ENCODE measurements at regions of chr16 and their contacts with region 1.

Region 1: GRCh38 chr16:78727536-78727935 is 628.1 kb downstream of the WWOX start:
- DNase-seq: no peak
- ATAC-seq: no peak
- H3K4me3 ChIP-seq: no peak overlapping the region
- H3K4me3 Mint-ChIP-seq: no peak overlapping the region
- H3K27ac ChIP-seq: no peak overlapping the region
- H3K27ac Mint-ChIP-seq: no peak overlapping the region
- H3K4me1 ChIP-seq: no peaks in the 10 kb centered on the region
- H3K4me1 Mint-ChIP-seq: no peaks in the 10 kb centered on the region
- H3K27me3 ChIP-seq: no peaks in the 10 kb centered on the region
- H3K27me3 Mint-ChIP-seq: no peaks in the 10 kb centered on the region

Region 2: DNA sequence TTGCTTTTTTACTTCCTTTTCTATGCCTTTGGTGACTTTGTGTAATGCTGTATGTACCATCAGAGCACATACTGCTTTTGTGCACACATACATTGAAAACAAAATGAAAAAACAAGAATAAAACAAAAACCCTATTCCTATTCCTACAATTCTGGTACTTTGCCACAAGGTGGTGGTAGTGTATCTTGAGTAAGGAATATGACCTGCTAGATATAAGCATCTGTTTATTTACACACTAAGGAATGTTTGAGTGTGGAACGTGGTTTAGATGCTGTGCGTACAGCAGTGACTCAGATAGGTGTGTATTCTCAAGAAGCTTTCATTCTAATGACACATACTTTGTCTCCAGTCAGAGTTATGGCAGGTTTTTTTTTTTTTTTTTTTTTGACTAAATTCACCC is 21.8 kb before region 1 on chr16:
- CTCF ChIA-PET with region 1: no interaction called
- POLR2A ChIA-PET with region 1: no interaction called
- DNase-seq: peak in 1 of 35 experiments; percentile 64
- ATAC-seq: peak in 3 of 4 experiments; percentile 35 to 69 (median 54)
- H3K4me3 ChIP-seq: no peak overlapping the region
- H3K4me3 Mint-ChIP-seq: no peak overlapping the region
- H3K27ac ChIP-seq: no peak overlapping the region
- H3K27ac Mint-ChIP-seq: no peak overlapping the region
- H3K4me1 ChIP-seq: no peaks in the 10 kb centered on the region
- H3K4me1 Mint-ChIP-seq: peaks cover 2 to 8% (median 5%) of the 10 kb centered on the region in 3 donors
- H3K27me3 ChIP-seq: no peaks in the 10 kb centered on the region
- H3K27me3 Mint-ChIP-seq: no peaks in the 10 kb centered on the region

Region 3: DNA sequence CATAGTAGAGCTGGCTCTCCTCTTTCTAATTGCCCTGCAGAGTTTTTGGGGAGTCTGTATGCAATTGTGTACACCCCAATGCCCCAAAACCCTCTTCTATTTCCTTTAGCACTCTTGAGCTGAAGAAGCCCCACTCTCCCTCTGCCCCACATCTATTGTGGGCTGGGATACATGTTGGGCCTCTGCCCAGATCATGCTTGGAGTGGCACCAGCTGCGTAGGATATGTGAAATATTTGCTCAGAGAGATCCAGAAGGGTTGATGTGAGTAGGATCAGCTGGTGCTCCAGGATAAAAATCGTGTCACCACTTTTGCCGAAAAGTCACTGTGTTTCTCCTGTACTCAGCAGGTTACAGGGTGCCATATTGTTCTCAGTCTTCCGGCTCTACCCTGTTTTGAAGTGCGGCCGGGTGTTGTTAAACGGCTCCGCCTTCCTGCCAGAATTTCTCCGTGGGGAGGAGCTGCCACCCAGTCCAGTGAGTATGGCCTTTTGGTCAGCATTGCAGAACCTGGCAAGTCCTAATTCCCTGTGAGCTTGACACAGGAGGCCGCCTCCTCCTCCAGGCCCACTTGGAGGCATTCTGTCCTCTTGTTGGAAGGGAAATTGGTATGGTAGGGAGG is 36.4 kb after region 1 on chr16:
- CTCF ChIA-PET with region 1: interaction called, 3 to 10 read pairs
- POLR2A ChIA-PET with region 1: no interaction called
- DNase-seq: no peak
- ATAC-seq: no peak
- H3K4me3 ChIP-seq: no peak overlapping the region
- H3K4me3 Mint-ChIP-seq: no peak overlapping the region
- H3K27ac ChIP-seq: no peak overlapping the region
- H3K27ac Mint-ChIP-seq: no peak overlapping the region
- H3K4me1 ChIP-seq: peaks cover 0 to 23% of the 10 kb centered on the region in 2 experiments
- H3K4me1 Mint-ChIP-seq: peaks cover 7 to 12% (median 9%) of the 10 kb centered on the region in 3 donors
- H3K27me3 ChIP-seq: no peaks in the 10 kb centered on the region
- H3K27me3 Mint-ChIP-seq: no peaks in the 10 kb centered on the region

Region 4: DNA sequence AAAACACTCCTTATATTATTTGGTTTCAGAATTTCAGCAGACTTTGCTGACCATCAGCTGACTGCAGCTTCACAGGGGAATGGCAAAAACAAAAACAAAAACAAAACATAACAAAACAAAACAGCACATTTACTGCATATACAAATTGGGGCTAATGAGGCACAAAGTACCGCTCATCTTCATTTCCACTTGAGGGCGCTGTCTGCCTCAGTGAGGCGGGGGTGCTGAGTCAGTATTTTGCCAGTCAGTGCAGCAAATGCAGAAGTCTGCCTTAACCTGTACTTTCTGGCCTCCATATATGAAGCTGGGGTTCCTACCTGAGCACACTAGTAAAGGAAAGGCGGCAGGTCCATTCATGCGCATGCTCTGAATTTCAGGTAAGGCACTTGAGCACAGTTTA is 1799.8 kb after region 1 on chr16:
- CTCF ChIA-PET with region 1: interaction called in 1 of 2 experiments, 18 read pairs
- POLR2A ChIA-PET with region 1: no interaction called
- DNase-seq: peak in 26 of 35 experiments; percentile 4 to 54 (median 18)
- ATAC-seq: peak in 3 of 4 experiments; percentile 33 to 48 (median 44)
- H3K4me3 ChIP-seq: no peak overlapping the region
- H3K4me3 Mint-ChIP-seq: no peak overlapping the region
- H3K27ac ChIP-seq: no peak overlapping the region
- H3K27ac Mint-ChIP-seq: no peak overlapping the region
- H3K4me1 ChIP-seq: no peaks in the 10 kb centered on the region
- H3K4me1 Mint-ChIP-seq: peaks cover 0 to 7% (median 2%) of the 10 kb centered on the region in 3 donors
- H3K27me3 ChIP-seq: no peaks in the 10 kb centered on the region
- H3K27me3 Mint-ChIP-seq: peaks cover 0 to 2% of the 10 kb centered on the region in 2 donors